ENCODE measurements at regions of chr13 and their contacts with region 1.

Region 1: GRCh38 chr13:48449656-48450055 is 36.7 kb upstream of the LPAR6 start:
- DNase-seq: no peak

Region 2: GRCh38 chr13:48492470-48493065 is 42.9 kb after region 1 on chr13:
- intact Hi-C with region 1: loop called (anchors 5 kb)
- DNase-seq: peak; percentile 91